ENCODE measurements at regions of chr10 and their contacts with region 1.

Region 1: GRCh38 chr10:106980495-106981451 is 183.7 kb downstream of the SORCS1 start:
- DNase-seq: peak; percentile 33
- ATAC-seq: peak; percentile 82
- H3K4me3 ChIP-seq: no peak overlapping the region
- H3K27ac ChIP-seq: no peak overlapping the region
- H3K4me1 ChIP-seq: 0 out of 2 replicates have a peak, but pooled peaks cover 3% of the 10 kb centered on the region
- H3K27me3 ChIP-seq: no peaks in the 10 kb centered on the region
- CTCF ChIP-seq: peak; percentile 26 to 67 (median 33); a peak in 4 of 6 replicates
- EP300 ChIP-seq: no peak
- POLR2A ChIP-seq: no peak
- RAD21 ChIP-seq: peak; percentile 92

Region 2: DNA sequence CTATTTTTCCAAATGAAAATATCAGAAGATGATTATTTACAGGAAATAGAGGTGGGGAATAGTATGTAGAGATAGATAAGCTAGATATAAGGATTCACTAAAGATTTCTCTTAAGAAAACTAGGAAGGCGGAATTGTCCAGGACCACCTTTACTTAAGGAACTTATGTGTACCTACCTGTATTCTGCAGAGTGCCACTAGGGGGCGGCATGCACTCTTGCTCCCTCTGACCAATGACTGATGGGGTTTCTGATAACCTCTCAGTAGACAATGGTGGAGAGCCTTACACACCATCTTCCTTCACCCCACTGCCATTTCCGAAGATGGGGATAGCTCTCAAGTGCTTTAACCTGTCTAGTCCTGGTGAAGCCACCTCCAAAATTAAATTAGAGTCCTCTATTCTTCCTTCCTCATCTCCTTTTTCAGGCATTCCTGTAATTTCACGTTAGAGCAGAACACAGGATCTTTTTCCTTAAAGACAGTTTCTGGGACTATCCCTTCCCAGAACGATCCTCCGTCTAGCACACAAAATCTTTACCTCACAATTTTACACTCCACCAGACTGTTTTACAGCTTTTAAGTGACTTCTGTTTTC is 269.4 kb before region 1 on chr10:
- CTCF ChIA-PET with region 1: interaction called, 62 read pairs
- POLR2A ChIA-PET with region 1: no interaction called
- RAD21 ChIA-PET with region 1: interaction called, 27 read pairs
- SMC1A ChIA-PET with region 1: interaction called, 27 read pairs
- in situ Hi-C with region 1: loop called (anchors 10 kb)
- intact Hi-C with region 1: no loop called
- DNase-seq: no peak
- ATAC-seq: peak; percentile 57
- H3K4me3 ChIP-seq: no peak overlapping the region
- H3K27ac ChIP-seq: no peak overlapping the region
- H3K4me1 ChIP-seq: no peaks in the 10 kb centered on the region
- H3K27me3 ChIP-seq: no peaks in the 10 kb centered on the region
- CTCF ChIP-seq: peak; percentile 62 to 87 (median 82)
- EP300 ChIP-seq: no peak
- POLR2A ChIP-seq: no peak
- RAD21 ChIP-seq: peak; percentile 73

Region 3: DNA sequence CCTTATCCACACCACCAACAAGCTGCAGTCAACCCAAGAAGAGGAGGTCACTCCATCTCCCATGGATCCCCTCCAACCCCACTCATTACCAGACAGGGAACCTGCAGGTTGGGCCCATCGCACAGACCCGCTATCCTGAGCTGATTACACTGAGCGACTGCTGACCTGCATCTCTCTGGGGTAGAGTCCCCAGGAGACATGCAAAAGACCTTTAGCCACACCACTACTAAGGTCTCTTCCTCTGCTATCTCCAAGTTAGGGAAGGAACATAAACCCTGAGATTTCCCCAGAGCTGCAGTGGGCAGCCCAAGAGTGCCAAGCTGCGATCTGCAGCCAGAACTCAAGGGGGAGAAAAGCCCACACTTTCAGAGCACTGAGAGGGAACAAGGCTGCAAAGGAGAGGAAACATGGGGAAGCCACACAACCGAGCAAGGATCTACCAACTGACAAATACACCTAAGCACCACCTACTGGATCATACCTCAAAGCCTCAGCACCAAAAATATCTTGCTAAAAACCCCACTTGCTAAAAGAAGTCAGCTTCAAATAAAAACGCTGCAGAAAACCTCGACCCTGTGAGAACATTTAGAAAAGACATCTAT is 114.4 kb before region 1 on chr10:
- CTCF ChIA-PET with region 1: interaction called, 93 read pairs
- POLR2A ChIA-PET with region 1: interaction called, 6 read pairs
- RAD21 ChIA-PET with region 1: interaction called, 92 read pairs
- SMC1A ChIA-PET with region 1: interaction called, 66 read pairs
- in situ Hi-C with region 1: no loop called
- intact Hi-C with region 1: loop called (anchors 1 kb)
- DNase-seq: peak; percentile 58
- ATAC-seq: peak; percentile 68
- H3K4me3 ChIP-seq: no peak overlapping the region
- H3K27ac ChIP-seq: 0 out of 2 replicates have a peak overlapping the region, but pooled peaks have one; percentile 15
- H3K4me1 ChIP-seq: peaks cover 6% of the 10 kb centered on the region; the same call in 1 of the 2 replicates
- H3K27me3 ChIP-seq: no peaks in the 10 kb centered on the region
- CTCF ChIP-seq: peak; percentile 11 to 24 (median 15); a peak in 1 of 6 replicates
- EP300 ChIP-seq: no peak
- POLR2A ChIP-seq: no peak
- RAD21 ChIP-seq: peak; percentile 47

Region 4: DNA sequence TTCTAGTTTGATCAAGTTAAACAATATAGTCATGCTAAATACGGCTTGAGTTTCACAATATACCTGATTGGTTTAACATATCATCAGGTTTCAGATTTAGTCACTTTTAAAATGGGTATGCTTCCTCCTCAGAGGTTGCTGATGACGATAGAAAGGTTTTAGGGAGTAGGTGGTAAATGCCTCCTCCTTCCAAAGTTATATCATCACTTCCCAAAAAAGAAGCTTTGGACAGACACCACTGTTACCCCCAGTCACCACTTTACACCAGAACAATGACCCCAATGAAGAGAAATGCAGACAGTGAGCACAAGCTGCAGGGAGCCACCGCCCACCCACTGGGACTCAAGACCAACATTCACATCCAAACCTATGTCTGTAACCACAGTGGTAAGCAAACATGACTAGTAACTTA is 60.9 kb before region 1 on chr10:
- CTCF ChIA-PET with region 1: interaction called, 3 read pairs
- POLR2A ChIA-PET with region 1: no interaction called
- RAD21 ChIA-PET with region 1: no interaction called
- SMC1A ChIA-PET with region 1: interaction called, 15 read pairs
- in situ Hi-C with region 1: no loop called
- intact Hi-C with region 1: no loop called
- DNase-seq: peak; percentile 55
- ATAC-seq: peak; percentile 93
- H3K4me3 ChIP-seq: peak overlapping the region; percentile 35
- H3K27ac ChIP-seq: peak overlapping the region; percentile 46; the same call in 1 of the 2 replicates
- H3K4me1 ChIP-seq: peaks cover 17% of the 10 kb centered on the region
- H3K27me3 ChIP-seq: no peaks in the 10 kb centered on the region
- CTCF ChIP-seq: no peak
- EP300 ChIP-seq: 0 out of 4 replicates have a peak, but pooled peaks of 1 of the 2 experiments have one; percentile 14
- POLR2A ChIP-seq: no peak
- RAD21 ChIP-seq: no peak

Region 5: DNA sequence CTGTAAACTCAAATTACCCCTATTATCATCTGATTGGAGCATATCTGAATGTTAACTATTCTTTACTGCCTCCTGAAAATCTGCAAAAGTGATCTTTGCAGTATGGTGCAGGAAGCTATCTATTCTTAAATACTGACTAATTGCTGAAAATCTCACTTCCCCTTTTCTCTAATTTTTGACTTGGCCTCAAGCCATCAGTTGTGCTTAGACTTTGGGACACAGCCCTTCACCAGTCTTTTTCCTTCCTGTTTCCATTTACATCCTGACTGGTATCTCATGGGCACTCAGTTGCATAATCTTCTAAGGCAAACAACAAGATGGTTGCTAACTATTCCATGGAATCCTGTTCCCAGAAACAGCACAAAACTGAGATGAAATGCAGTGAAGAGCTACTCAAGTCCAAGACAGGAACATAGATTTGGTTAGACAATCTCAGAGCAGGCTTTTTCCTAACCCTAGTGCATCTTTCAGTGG is 44.8 kb before region 1 on chr10:
- CTCF ChIA-PET with region 1: interaction called, 10 read pairs
- POLR2A ChIA-PET with region 1: no interaction called
- RAD21 ChIA-PET with region 1: interaction called, 17 read pairs
- SMC1A ChIA-PET with region 1: interaction called, 11 read pairs
- in situ Hi-C with region 1: no loop called
- intact Hi-C with region 1: no loop called
- DNase-seq: peak; percentile 93
- ATAC-seq: peak; percentile 75
- H3K4me3 ChIP-seq: no peak overlapping the region; the same call in 1 of the 2 replicates
- H3K27ac ChIP-seq: peak overlapping the region; percentile 67
- H3K4me1 ChIP-seq: peaks cover 42% of the 10 kb centered on the region
- H3K27me3 ChIP-seq: no peaks in the 10 kb centered on the region
- CTCF ChIP-seq: no peak
- EP300 ChIP-seq: peak; percentile 38 to 97; a peak in 3 of 4 replicates
- POLR2A ChIP-seq: no peak
- RAD21 ChIP-seq: no peak

Region 6: DNA sequence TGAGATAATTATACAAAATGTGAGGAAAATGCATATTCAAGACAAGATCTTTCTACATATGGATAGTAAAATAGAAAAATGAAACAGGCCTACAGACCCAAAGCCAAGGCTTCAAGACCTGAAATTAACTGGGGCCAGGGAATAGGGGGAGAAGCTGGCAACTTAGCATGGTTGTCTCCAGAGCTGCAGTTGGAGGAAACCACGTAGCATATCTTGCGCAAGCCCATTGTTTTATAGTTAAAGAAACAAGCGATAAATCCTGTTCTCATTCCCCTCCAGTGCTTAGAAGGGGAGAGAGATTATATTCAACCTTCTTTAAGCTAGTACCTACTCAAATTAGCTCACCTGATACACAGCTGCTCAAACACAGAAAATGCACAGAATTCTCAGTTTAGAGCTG is 13.3 kb before region 1 on chr10:
- CTCF ChIA-PET with region 1: interaction called, 5 read pairs
- POLR2A ChIA-PET with region 1: no interaction called
- RAD21 ChIA-PET with region 1: interaction called, 4 read pairs
- SMC1A ChIA-PET with region 1: interaction called, 31 read pairs
- in situ Hi-C with region 1: no loop called
- intact Hi-C with region 1: no loop called
- DNase-seq: no peak
- ATAC-seq: no peak
- H3K4me3 ChIP-seq: no peak overlapping the region
- H3K27ac ChIP-seq: no peak overlapping the region
- H3K4me1 ChIP-seq: no peaks in the 10 kb centered on the region
- H3K27me3 ChIP-seq: no peaks in the 10 kb centered on the region
- CTCF ChIP-seq: no peak
- EP300 ChIP-seq: no peak
- POLR2A ChIP-seq: no peak
- RAD21 ChIP-seq: no peak

Region 7: DNA sequence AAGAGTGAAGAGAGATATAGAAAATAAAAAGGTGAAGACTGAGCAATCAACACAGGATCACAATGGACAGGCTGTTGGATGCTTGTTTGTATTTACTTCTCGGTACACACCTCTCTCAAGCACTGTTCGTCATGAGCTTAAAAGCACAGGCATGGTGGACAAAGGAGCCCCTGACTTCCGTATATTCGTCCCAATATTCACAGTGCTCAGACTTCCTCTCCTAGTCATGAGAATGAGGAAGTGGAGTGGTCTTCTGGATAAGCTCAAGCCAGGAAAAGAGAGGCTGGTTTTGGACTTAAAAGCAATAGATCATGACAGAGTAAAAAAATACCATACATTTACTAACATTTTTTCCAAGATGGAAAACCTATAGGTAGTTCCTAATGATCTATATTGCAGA is 11.3 kb after region 1 on chr10:
- CTCF ChIA-PET with region 1: interaction called, 10 read pairs
- POLR2A ChIA-PET with region 1: no interaction called
- RAD21 ChIA-PET with region 1: interaction called, 12 read pairs
- SMC1A ChIA-PET with region 1: interaction called, 11 read pairs
- in situ Hi-C with region 1: no loop called
- intact Hi-C with region 1: no loop called
- DNase-seq: no peak
- ATAC-seq: no peak
- H3K4me3 ChIP-seq: no peak overlapping the region
- H3K27ac ChIP-seq: no peak overlapping the region
- H3K4me1 ChIP-seq: peaks cover 3% of the 10 kb centered on the region; the same call in 1 of the 2 replicates
- H3K27me3 ChIP-seq: no peaks in the 10 kb centered on the region
- CTCF ChIP-seq: no peak
- EP300 ChIP-seq: no peak
- POLR2A ChIP-seq: no peak
- RAD21 ChIP-seq: no peak

Region 8: DNA sequence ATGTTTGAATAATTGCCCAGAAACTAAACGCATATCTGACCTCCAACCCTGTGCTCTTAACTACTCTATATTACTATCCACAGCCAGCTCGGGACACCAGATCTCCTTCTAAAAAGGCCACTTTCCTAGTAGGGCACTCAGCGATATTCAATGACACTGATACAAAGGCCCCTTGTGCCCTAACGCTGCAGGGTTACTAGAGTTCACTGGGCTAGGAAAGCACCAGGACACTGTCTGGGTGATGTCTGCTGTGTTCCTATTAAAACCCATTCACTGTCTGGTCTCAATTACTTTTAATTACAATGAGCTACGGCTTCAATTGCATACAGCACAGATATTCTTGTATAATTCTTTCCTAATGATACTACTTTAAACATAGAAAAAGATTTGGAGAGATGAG is 92.0 kb after region 1 on chr10:
- CTCF ChIA-PET with region 1: no interaction called
- POLR2A ChIA-PET with region 1: no interaction called
- RAD21 ChIA-PET with region 1: no interaction called
- SMC1A ChIA-PET with region 1: no interaction called
- in situ Hi-C with region 1: no loop called
- intact Hi-C with region 1: no loop called
- DNase-seq: no peak
- ATAC-seq: no peak
- H3K4me3 ChIP-seq: no peak overlapping the region
- H3K27ac ChIP-seq: no peak overlapping the region
- H3K4me1 ChIP-seq: no peaks in the 10 kb centered on the region
- H3K27me3 ChIP-seq: no peaks in the 10 kb centered on the region
- CTCF ChIP-seq: no peak
- EP300 ChIP-seq: no peak
- POLR2A ChIP-seq: no peak
- RAD21 ChIP-seq: no peak

Region 9: GRCh38 chr10:107103174-107104025 is 122.6 kb after region 1 on chr10:
- CTCF ChIA-PET with region 1: no interaction called
- POLR2A ChIA-PET with region 1: no interaction called
- RAD21 ChIA-PET with region 1: no interaction called
- SMC1A ChIA-PET with region 1: no interaction called
- in situ Hi-C with region 1: no loop called
- intact Hi-C with region 1: no loop called
- DNase-seq: no peak
- ATAC-seq: no peak
- H3K4me3 ChIP-seq: no peak overlapping the region
- H3K27ac ChIP-seq: no peak overlapping the region
- H3K4me1 ChIP-seq: no peaks in the 10 kb centered on the region
- H3K27me3 ChIP-seq: no peaks in the 10 kb centered on the region
- CTCF ChIP-seq: no peak
- EP300 ChIP-seq: no peak
- POLR2A ChIP-seq: no peak
- RAD21 ChIP-seq: no peak

Region 10: DNA sequence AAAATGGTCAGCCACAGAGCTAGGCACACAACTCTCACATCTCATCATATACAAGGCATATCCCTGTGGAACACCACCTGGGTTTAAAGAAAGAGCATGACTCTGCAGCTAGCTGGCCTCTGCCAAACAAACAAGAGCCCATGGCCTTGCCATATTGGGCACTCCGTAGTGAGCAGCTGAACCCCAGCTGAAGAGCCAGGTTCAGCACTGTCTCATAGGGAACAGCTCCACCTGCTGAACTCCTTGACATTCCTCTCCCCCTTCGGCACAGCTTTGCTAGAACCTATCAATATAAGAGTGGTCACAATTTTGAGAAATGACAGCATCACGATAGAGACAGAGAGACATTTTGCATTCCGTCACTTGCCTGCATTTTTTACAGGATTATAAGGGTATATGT is 163.7 kb after region 1 on chr10:
- CTCF ChIA-PET with region 1: no interaction called
- POLR2A ChIA-PET with region 1: no interaction called
- RAD21 ChIA-PET with region 1: no interaction called
- SMC1A ChIA-PET with region 1: no interaction called
- in situ Hi-C with region 1: no loop called
- intact Hi-C with region 1: no loop called
- DNase-seq: no peak
- ATAC-seq: peak; percentile 51; the same call in 2 of the 3 replicates
- H3K4me3 ChIP-seq: no peak overlapping the region
- H3K27ac ChIP-seq: no peak overlapping the region
- H3K4me1 ChIP-seq: no peaks in the 10 kb centered on the region
- H3K27me3 ChIP-seq: no peaks in the 10 kb centered on the region
- CTCF ChIP-seq: no peak; a peak in 1 of 6 replicates
- EP300 ChIP-seq: no peak
- POLR2A ChIP-seq: no peak
- RAD21 ChIP-seq: no peak

Measured in GM12878 (cell line).